H1 (cell line): ENCODE measurements at regions of chr3 and their contacts with region 1.

Region 1: DNA sequence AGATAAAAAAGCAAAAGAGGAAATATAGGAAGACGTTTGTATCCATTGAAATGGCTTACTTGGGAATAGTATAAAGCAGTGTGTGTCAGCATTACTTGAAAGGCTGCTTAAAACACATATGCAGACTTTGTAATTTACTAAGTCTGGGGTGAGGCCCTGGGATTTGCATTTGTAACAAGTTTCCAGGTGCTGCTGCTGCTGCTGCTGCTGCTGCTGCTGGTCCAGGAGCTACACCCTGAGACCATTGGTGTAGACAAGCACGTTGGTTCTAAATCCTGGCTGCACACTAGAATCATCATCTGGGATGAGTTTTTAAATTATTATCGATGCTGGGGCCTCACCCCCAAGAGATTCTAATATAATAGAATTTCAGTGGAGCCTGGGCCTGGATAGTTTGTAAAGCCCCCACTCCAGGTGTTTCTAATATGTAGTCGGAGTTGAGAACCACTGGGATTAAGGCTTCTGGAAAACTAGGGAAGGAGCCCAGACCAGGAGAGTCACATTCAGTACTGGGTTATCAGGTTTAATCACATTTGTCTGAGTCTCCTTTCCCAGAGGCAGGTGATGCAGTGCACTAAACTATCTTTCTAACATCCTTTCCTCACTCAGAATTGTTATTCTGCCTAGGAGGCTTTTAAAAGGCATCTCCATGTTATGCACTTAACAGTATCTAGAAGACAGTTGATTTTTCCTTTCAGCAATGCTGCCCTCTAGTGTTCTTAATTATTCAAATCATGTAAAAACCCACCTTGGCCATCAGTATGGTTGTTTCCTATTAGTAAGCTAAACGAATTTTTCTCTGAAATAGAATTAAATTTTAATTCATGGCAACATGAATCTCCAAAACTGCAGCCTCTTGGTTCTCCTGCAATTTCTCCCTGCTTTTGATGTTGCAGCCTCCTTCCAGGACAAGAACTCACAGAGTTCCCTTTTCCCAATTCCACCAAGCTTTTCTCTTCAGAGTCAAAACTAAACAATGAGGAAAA is 45.4 kb downstream of the SSR3 start:
- DNase-seq: no peak
- H3K4me3 ChIP-seq: no peak overlapping the region
- H3K27ac ChIP-seq: no peak overlapping the region
- H3K4me1 ChIP-seq: no peaks in the 10 kb centered on the region
- H3K27me3 ChIP-seq: no peaks in the 10 kb centered on the region
- CTCF ChIP-seq: peak in 2 of 3 experiments; percentile 24 to 48; a peak in 2 of 4 replicates
- EP300 ChIP-seq: no peak
- POLR2A ChIP-seq: no peak
- RAD21 ChIP-seq: peak; percentile 70 to 76

Region 2: GRCh38 chr3:156174229-156174847 is 335.1 kb before region 1 on chr3:
- CTCF ChIA-PET with region 1: interaction called, 61 read pairs
- POLR2A ChIA-PET with region 1: no interaction called
- DNase-seq: no peak
- H3K4me3 ChIP-seq: no peak overlapping the region
- H3K27ac ChIP-seq: no peak overlapping the region
- H3K4me1 ChIP-seq: no peaks in the 10 kb centered on the region
- H3K27me3 ChIP-seq: no peaks in the 10 kb centered on the region
- CTCF ChIP-seq: peak in 2 of 3 experiments; percentile 43 to 62; a peak in 3 of 4 replicates
- EP300 ChIP-seq: no peak
- POLR2A ChIP-seq: no peak
- RAD21 ChIP-seq: peak; percentile 80 to 84

Region 3: GRCh38 chr3:156449712-156450574 is 59.5 kb before region 1 on chr3:
- CTCF ChIA-PET with region 1: interaction called, 161 read pairs
- POLR2A ChIA-PET with region 1: no interaction called
- DNase-seq: no peak
- H3K4me3 ChIP-seq: no peak overlapping the region
- H3K27ac ChIP-seq: no peak overlapping the region
- H3K4me1 ChIP-seq: no peaks in the 10 kb centered on the region
- H3K27me3 ChIP-seq: no peaks in the 10 kb centered on the region
- CTCF ChIP-seq: peak in 2 of 3 experiments; percentile 62 to 75; a peak in 3 of 4 replicates
- EP300 ChIP-seq: no peak
- POLR2A ChIP-seq: no peak
- RAD21 ChIP-seq: peak; percentile 47 to 60

Region 4: GRCh38 chr3:156483961-156484787 is 25.3 kb before region 1 on chr3:
- CTCF ChIA-PET with region 1: interaction called, 15 read pairs
- POLR2A ChIA-PET with region 1: no interaction called
- DNase-seq: no peak
- H3K4me3 ChIP-seq: no peak overlapping the region
- H3K27ac ChIP-seq: no peak overlapping the region
- H3K4me1 ChIP-seq: peaks cover 0 to 3% (median 0%) of the 10 kb centered on the region in 4 experiments; a peak in 1 of 7 replicates
- H3K27me3 ChIP-seq: no peaks in the 10 kb centered on the region
- CTCF ChIP-seq: no peak
- EP300 ChIP-seq: no peak
- POLR2A ChIP-seq: no peak
- RAD21 ChIP-seq: no peak

Region 5: DNA sequence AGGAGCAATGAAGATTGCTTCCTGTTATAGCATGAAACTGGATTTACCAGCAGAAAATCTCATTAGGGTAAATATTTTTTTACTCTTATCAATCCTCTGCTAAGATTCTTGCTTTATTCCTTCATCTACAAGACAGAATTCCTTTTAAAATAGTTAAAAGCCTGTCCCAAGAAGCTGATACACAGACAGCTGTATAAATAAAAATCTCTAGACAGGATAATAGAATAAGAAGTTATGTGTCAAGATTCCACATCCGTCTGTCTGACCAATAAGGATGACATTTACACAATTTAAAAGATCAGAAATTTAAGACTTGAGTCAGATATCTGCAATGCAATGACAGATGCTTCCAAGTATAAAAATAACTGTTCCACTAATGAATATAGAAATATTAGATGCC is 12.2 kb before region 1 on chr3:
- CTCF ChIA-PET with region 1: interaction called, 14 read pairs
- POLR2A ChIA-PET with region 1: no interaction called
- DNase-seq: no peak
- H3K4me3 ChIP-seq: no peak overlapping the region
- H3K27ac ChIP-seq: no peak overlapping the region
- H3K4me1 ChIP-seq: no peaks in the 10 kb centered on the region
- H3K27me3 ChIP-seq: no peaks in the 10 kb centered on the region
- CTCF ChIP-seq: no peak
- EP300 ChIP-seq: no peak
- POLR2A ChIP-seq: no peak
- RAD21 ChIP-seq: no peak

Region 6: GRCh38 chr3:157064402-157064801 is 554.9 kb after region 1 on chr3:
- CTCF ChIA-PET with region 1: no interaction called
- POLR2A ChIA-PET with region 1: no interaction called
- DNase-seq: no peak
- H3K4me3 ChIP-seq: no peak overlapping the region
- H3K27ac ChIP-seq: no peak overlapping the region
- H3K4me1 ChIP-seq: peaks cover 5 to 15% (median 9%) of the 10 kb centered on the region in 4 experiments
- H3K27me3 ChIP-seq: peaks cover 0 to 6% (median 3%) of the 10 kb centered on the region in 4 experiments; a peak in 3 of 7 replicates
- CTCF ChIP-seq: no peak
- EP300 ChIP-seq: no peak
- POLR2A ChIP-seq: no peak
- RAD21 ChIP-seq: no peak

Region 7: DNA sequence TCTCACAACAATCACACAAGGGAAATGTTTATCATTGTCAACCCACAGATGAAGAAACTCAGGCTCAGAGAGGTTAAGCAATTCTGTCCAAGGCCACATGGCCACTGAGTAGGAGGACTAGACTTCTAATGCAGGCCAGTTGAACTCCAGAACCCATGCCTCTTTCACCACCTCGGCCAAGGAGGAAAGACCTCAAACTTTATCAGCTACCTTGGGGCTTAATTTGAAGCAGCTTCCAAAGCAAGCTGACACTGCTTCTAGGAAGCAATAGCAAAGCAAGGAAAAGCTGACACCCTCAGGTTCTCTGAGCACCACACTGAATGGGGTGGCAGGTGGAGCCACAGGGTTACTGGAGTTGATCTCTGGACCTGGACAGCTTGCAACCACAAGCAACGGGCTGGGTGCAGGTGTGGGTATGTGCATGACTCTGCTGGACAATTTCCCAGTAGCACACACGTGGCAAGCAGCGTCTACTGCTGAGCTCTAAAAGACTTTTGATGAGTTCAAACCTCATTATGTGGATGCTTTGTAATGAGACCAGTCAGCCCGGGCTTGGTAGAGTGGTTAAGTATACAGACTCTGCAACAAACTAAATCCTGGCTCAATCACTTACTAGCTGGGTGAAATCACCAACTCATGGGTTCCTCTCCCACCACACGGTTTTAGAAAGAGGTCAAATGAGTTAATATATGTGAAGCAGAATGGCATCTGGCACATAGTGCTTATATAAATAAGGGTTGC is 627.3 kb after region 1 on chr3:
- CTCF ChIA-PET with region 1: interaction called, 10 read pairs
- POLR2A ChIA-PET with region 1: no interaction called
- DNase-seq: no peak
- H3K4me3 ChIP-seq: no peak overlapping the region
- H3K27ac ChIP-seq: no peak overlapping the region
- H3K4me1 ChIP-seq: no peaks in the 10 kb centered on the region
- H3K27me3 ChIP-seq: no peaks in the 10 kb centered on the region
- CTCF ChIP-seq: no peak
- EP300 ChIP-seq: no peak
- POLR2A ChIP-seq: no peak
- RAD21 ChIP-seq: no peak